CD8-positive, alpha-beta T cell (primary cell): ENCODE measurements at regions of chr13 and their contacts with region 1.

Region 1: GRCh38 chr13:42271337-42272114 is 426 bp upstream of the AKAP11 start:
- DNase-seq: peak; percentile 83 to 99 (median 91)
- ATAC-seq: peak; percentile 86
- H3K4me3 ChIP-seq: peak overlapping the region; percentile 63 to 78
- H3K4me3 Mint-ChIP-seq: peak overlapping the region; percentile 97
- H3K27ac ChIP-seq: peak overlapping the region; percentile 89 to 94
- H3K27ac Mint-ChIP-seq: peak overlapping the region; percentile 96
- H3K4me1 ChIP-seq: peaks cover 31% of the 10 kb centered on the region
- H3K4me1 Mint-ChIP-seq: peaks cover 49% of the 10 kb centered on the region
- H3K27me3 ChIP-seq: no peaks in the 10 kb centered on the region
- H3K27me3 Mint-ChIP-seq: no peaks in the 10 kb centered on the region
- CTCF ChIP-seq: no peak

Region 2: GRCh38 chr13:41132512-41133152 is 1138.9 kb before region 1 on chr13 and contains the start of gene KBTBD6:
- CTCF ChIA-PET with region 1: no interaction called
- POLR2A ChIA-PET with region 1: no interaction called
- intact Hi-C with region 1: loop called (anchors 1 to 5 kb)
- DNase-seq: peak; percentile 80 to 96 (median 90)
- ATAC-seq: peak; percentile 95
- H3K4me3 ChIP-seq: peak within 1 kb of the TSS; percentile 70 to 80
- H3K4me3 Mint-ChIP-seq: peak within 1 kb of the TSS; percentile 95
- H3K27ac ChIP-seq: peak within 1 kb of the TSS; percentile 48 to 64
- H3K27ac Mint-ChIP-seq: peak within 1 kb of the TSS; percentile 93
- H3K4me1 ChIP-seq: peaks cover 43% of the 10 kb centered on the region
- H3K4me1 Mint-ChIP-seq: peaks cover 55% of the 10 kb centered on the region
- H3K27me3 ChIP-seq: no peaks in the 10 kb centered on the region
- H3K27me3 Mint-ChIP-seq: no peaks in the 10 kb centered on the region
- CTCF ChIP-seq: no peak
- total RNA-seq, gene KBTBD6: 2.2 to 2.3 TPM

Region 3: GRCh38 chr13:41263261-41264027 is 1008.1 kb before region 1 on chr13 and contains the start of gene MTRF1:
- CTCF ChIA-PET with region 1: no interaction called
- POLR2A ChIA-PET with region 1: no interaction called
- intact Hi-C with region 1: loop called in 1 of 2 experiments (anchors 5 kb)
- DNase-seq: peak; percentile 65 to 91 (median 82)
- ATAC-seq: peak; percentile 90
- H3K4me3 ChIP-seq: peak within 1 kb of the TSS; percentile 68 to 72
- H3K4me3 Mint-ChIP-seq: peak within 1 kb of the TSS; percentile 99
- H3K27ac ChIP-seq: peak within 1 kb of the TSS; percentile 73 to 84
- H3K27ac Mint-ChIP-seq: peak within 1 kb of the TSS; percentile 99
- H3K4me1 ChIP-seq: peaks cover 26% of the 10 kb centered on the region
- H3K4me1 Mint-ChIP-seq: peaks cover 40% of the 10 kb centered on the region
- H3K27me3 ChIP-seq: no peaks in the 10 kb centered on the region
- H3K27me3 Mint-ChIP-seq: no peaks in the 10 kb centered on the region
- CTCF ChIP-seq: no peak
- total RNA-seq, gene MTRF1: 26.2 to 26.9 TPM

Region 4: DNA sequence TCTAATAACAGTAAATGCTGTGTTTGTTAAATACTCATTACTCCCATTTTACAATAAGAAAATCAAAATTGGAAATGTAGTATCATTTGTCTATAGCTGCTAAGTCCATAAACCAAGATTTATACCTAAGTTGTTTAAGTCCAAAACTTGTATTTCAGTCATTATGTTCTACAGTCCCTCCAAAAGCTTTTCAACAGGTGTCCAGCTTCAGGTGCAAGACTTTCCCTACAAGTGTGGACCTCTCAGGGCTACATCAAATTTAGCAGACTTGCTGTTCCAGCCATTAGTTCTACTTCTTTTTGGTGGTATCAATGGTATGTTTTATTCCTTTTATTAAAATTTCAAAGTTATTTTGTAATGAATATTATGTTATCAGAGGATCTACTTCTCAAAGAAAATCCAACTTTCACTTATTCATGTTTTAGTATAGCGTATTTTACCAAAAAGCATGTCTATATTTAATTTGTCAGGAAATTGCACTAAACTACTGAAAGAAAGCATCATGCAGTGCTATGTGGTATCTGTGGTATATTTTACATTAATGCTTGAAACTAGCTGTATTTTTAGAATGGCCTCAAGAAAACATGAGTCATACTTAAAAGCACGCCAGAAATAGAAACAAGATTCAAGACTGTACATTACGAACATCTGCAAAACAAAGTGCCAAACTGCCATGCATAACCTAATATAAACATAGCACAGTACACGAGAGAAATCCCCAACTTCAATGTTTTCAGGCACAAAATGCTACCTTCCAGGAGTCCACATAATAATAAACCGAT is 355.2 kb before region 1 on chr13:
- CTCF ChIA-PET with region 1: no interaction called
- POLR2A ChIA-PET with region 1: no interaction called
- intact Hi-C with region 1: loop called in 1 of 2 experiments (anchors 5 kb)
- DNase-seq: peak in 2 of 9 experiments; percentile 33 to 59
- ATAC-seq: peak; percentile 65
- H3K4me3 ChIP-seq: no peak overlapping the region
- H3K4me3 Mint-ChIP-seq: peak overlapping the region; percentile 26
- H3K27ac ChIP-seq: peak overlapping the region in 1 of 2 experiments; percentile 31
- H3K27ac Mint-ChIP-seq: peak overlapping the region; percentile 42
- H3K4me1 ChIP-seq: peaks cover 24% of the 10 kb centered on the region
- H3K4me1 Mint-ChIP-seq: peaks cover 47% of the 10 kb centered on the region
- H3K27me3 ChIP-seq: no peaks in the 10 kb centered on the region
- H3K27me3 Mint-ChIP-seq: no peaks in the 10 kb centered on the region
- CTCF ChIP-seq: no peak

Region 5: GRCh38 chr13:42048682-42049453 is 222.7 kb before region 1 on chr13:
- CTCF ChIA-PET with region 1: no interaction called
- POLR2A ChIA-PET with region 1: interaction called, 3 read pairs
- intact Hi-C with region 1: loop called (anchors 5 to 10 kb)
- DNase-seq: peak; percentile 23 to 74 (median 60)
- ATAC-seq: peak; percentile 70
- H3K4me3 ChIP-seq: peak overlapping the region; percentile 80 to 83
- H3K4me3 Mint-ChIP-seq: peak overlapping the region; percentile 86
- H3K27ac ChIP-seq: peak overlapping the region in 1 of 2 experiments; percentile 20
- H3K27ac Mint-ChIP-seq: peak overlapping the region; percentile 60
- H3K4me1 ChIP-seq: peaks cover 10% of the 10 kb centered on the region
- H3K4me1 Mint-ChIP-seq: peaks cover 12% of the 10 kb centered on the region
- H3K27me3 ChIP-seq: no peaks in the 10 kb centered on the region
- H3K27me3 Mint-ChIP-seq: no peaks in the 10 kb centered on the region
- CTCF ChIP-seq: no peak

Region 6: GRCh38 chr13:42392716-42393572 is 121.4 kb after region 1 on chr13:
- CTCF ChIA-PET with region 1: interaction called, 4 read pairs
- POLR2A ChIA-PET with region 1: interaction called, 6 read pairs
- intact Hi-C with region 1: loop called in 1 of 2 experiments (anchors 5 kb)
- DNase-seq: peak in 4 of 9 experiments; percentile 31 to 77 (median 62)
- ATAC-seq: peak; percentile 64
- H3K4me3 ChIP-seq: peak overlapping the region in 1 of 2 experiments; percentile 1
- H3K4me3 Mint-ChIP-seq: peak overlapping the region; percentile 0
- H3K27ac ChIP-seq: peak overlapping the region in 1 of 2 experiments; percentile 72
- H3K27ac Mint-ChIP-seq: peak overlapping the region; percentile 69
- H3K4me1 ChIP-seq: peaks cover 51% of the 10 kb centered on the region
- H3K4me1 Mint-ChIP-seq: peaks cover 74% of the 10 kb centered on the region
- H3K27me3 ChIP-seq: no peaks in the 10 kb centered on the region
- H3K27me3 Mint-ChIP-seq: no peaks in the 10 kb centered on the region
- CTCF ChIP-seq: no peak